PC-9 (cell line): ENCODE measurements at regions of chr1 and their contacts with region 1.

Region 1: DNA sequence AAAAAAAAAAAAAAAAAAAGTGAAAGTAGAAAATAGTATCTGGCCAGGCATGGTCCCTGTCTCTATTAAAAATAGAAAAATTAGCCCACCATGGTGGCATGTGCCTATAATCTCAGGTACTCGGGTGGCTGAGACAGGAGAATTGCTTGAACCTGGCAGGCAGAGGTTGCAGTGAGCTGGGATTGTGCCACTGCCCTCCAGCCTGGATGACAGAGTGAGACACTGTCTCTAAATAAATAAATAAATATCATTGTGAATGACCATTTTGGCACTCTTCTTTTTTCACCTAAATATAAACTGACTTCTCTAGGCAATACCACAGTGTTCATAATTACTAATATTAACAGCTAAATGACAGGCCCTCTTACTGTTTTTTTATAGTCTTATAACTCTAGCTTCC is 14.5 kb downstream of the ELOA start:
- DNase-seq: no peak
- H3K4me3 ChIP-seq: no peak overlapping the region
- H3K27ac ChIP-seq: no peak overlapping the region
- H3K4me1 ChIP-seq: no peaks in the 10 kb centered on the region
- H3K27me3 ChIP-seq: no peaks in the 10 kb centered on the region
- CTCF ChIP-seq: no peak

Region 2: GRCh38 chr1:23554481-23555269 is 203.1 kb before region 1 on chr1:
- CTCF ChIA-PET with region 1: no interaction called
- POLR2A ChIA-PET with region 1: no interaction called
- intact Hi-C with region 1: no loop called
- DNase-seq: peak; percentile 59 to 80
- H3K4me3 ChIP-seq: peak overlapping the region; percentile 69; the same call in 1 of the 2 replicates
- H3K27ac ChIP-seq: peak overlapping the region; percentile 96
- H3K4me1 ChIP-seq: peaks cover 36% of the 10 kb centered on the region
- H3K27me3 ChIP-seq: no peaks in the 10 kb centered on the region
- CTCF ChIP-seq: no peak

Region 3: DNA sequence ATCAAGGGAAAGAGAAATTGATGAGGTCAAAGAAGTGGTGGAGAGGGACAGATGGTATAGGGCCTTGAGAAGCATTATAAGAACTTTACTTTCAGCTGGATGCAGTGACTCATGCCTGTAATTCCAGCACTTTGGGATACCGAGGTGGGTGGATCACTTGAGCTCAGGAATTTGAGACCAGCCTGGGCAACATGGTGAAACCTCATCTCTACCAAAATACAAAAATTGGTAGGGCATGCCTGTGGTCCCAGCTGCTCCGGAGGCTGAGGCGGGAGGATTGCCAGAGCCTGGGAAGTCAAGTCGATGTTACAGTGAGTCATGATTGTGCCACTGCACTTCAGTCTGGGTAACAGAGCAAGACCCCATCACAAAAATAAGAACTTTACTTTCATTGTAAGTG is 1586.1 kb after region 1 on chr1:
- CTCF ChIA-PET with region 1: no interaction called
- POLR2A ChIA-PET with region 1: interaction called, 11 read pairs
- intact Hi-C with region 1: no loop called
- DNase-seq: no peak
- H3K4me3 ChIP-seq: no peak overlapping the region
- H3K27ac ChIP-seq: no peak overlapping the region
- H3K4me1 ChIP-seq: peaks cover 17% of the 10 kb centered on the region
- H3K27me3 ChIP-seq: no peaks in the 10 kb centered on the region
- CTCF ChIP-seq: no peak